Stomach (tissue), 19 donors: ENCODE measurements at regions of chr15 and their contacts with region 1.

Region 1: DNA sequence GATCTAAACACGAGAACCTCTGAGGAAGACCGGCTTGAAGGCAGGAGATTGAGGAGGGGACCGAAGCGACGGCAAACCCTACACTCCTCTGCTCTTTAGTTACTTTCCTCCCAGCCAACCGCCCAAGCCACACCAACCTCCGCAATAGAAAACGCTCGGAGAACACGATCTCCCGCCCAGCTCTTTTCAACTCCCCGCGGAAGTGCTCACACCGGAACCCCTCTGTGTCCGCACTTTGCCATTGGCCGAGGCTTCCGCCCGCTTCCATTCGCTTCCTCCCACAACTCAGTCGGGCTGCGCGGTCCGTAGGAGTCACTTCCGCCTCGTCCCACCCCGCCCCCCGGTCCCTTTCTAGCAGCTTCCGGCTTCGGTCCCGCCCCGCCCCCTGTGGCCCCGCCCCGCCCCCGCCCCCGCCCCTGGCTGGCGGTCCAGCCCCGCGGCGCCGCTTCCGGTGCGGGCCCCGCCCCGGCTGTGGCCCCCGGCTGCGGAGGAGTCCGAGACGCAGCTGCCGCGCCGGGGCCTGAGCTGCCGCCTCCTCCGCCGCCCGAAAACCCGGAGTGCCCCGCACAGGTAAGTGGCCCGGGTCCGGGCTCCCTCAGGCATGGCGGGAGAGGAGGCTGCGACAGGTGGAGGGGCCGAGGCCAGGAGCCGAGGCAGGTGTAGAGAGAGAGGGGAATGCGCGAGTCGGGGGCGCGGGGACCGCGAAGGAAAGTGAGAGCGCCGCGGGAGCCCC is at the start of gene ARID3B:
- DNase-seq: peak; percentile 98 to 99
- H3K4me3 ChIP-seq: peak within 1 kb of the TSS; percentile 79 to 97 (median 88)
- H3K27ac ChIP-seq: peak within 1 kb of the TSS; percentile 79 to 92 (median 86)
- H3K4me1 ChIP-seq: peaks cover 16 to 50% (median 43%) of the 10 kb centered on the region in 4 donors
- H3K27me3 ChIP-seq: no peaks in the 10 kb centered on the region
- CTCF ChIP-seq: no peak
- EP300 ChIP-seq: no peak
- POLR2A ChIP-seq: no peak
- total RNA-seq, gene ARID3B: 2.9 to 25.2 (median 6.2) TPM

Region 2: GRCh38 chr15:74584779-74585178 is 43.9 kb after region 1 on chr15:
- intact Hi-C with region 1: no loop called
- DNase-seq: no peak
- H3K4me3 ChIP-seq: no peak overlapping the region
- H3K27ac ChIP-seq: no peak overlapping the region
- H3K4me1 ChIP-seq: no peaks in the 10 kb centered on the region
- H3K27me3 ChIP-seq: no peaks in the 10 kb centered on the region
- CTCF ChIP-seq: no peak
- EP300 ChIP-seq: no peak
- POLR2A ChIP-seq: no peak

Region 3: GRCh38 chr15:74604983-74605794 is 64.3 kb after region 1 on chr15:
- intact Hi-C with region 1: loop called (anchors 10 kb)
- DNase-seq: no peak
- H3K4me3 ChIP-seq: no peak overlapping the region
- H3K27ac ChIP-seq: no peak overlapping the region
- H3K4me1 ChIP-seq: peaks cover 0 to 11% (median 4%) of the 10 kb centered on the region in 4 donors
- H3K27me3 ChIP-seq: no peaks in the 10 kb centered on the region
- CTCF ChIP-seq: no peak
- EP300 ChIP-seq: no peak
- POLR2A ChIP-seq: no peak

Region 4: GRCh38 chr15:74615508-74616365 is 74.8 kb after region 1 on chr15 and contains the start of gene CLK3:
- intact Hi-C with region 1: no loop called
- DNase-seq: peak; percentile 98 to 99
- H3K4me3 ChIP-seq: peak within 1 kb of the TSS; percentile 82 to 93 (median 91)
- H3K27ac ChIP-seq: peak within 1 kb of the TSS; percentile 95 to 99 (median 97)
- H3K4me1 ChIP-seq: peaks cover 29 to 56% (median 54%) of the 10 kb centered on the region in 4 donors
- H3K27me3 ChIP-seq: no peaks in the 10 kb centered on the region
- CTCF ChIP-seq: no peak
- EP300 ChIP-seq: no peak
- POLR2A ChIP-seq: no peak
- total RNA-seq, gene CLK3: 50.1 to 226 (median 120) TPM